Spleen (tissue), 13 donors: ENCODE measurements at regions of chr2 and their contacts with region 1.

Region 1: DNA sequence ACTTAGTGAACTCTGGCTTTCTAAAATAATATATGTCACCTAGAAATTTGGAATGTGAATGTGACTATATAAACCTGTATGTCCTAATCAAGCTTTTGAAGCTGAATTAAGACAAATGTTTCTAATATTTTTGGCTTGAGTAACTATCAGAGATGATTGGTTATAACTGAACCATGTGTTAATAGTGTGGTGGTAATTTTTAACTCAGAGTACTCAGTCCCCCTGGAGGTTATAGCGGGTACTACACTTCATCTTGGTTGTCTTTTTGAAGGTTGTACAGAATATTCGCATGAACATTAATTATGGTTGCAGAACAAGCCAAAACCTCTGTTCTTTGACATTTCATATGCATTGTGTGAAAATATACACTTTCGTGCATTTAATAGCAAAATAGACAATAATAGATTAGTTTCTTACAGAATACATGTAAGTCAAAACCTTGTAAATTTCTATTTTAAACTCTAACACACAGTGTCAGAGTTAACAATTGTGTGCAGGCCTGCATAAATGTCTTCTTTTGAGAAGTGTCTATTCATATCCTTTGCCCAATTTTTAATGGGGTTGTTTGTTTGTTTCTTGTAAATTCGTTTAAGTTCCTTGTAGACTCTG is 86.0 kb downstream of the OSBPL6 start:
- DNase-seq: no peak
- H3K4me3 ChIP-seq: no peak overlapping the region
- H3K27ac ChIP-seq: no peak overlapping the region
- H3K4me1 ChIP-seq: peaks cover 0 to 4% (median 0%) of the 10 kb centered on the region in 6 donors
- H3K27me3 ChIP-seq: no peaks in the 10 kb centered on the region
- CTCF ChIP-seq: peak; percentile 41 to 82 (median 70)
- POLR2A ChIP-seq: no peak

Region 2: DNA sequence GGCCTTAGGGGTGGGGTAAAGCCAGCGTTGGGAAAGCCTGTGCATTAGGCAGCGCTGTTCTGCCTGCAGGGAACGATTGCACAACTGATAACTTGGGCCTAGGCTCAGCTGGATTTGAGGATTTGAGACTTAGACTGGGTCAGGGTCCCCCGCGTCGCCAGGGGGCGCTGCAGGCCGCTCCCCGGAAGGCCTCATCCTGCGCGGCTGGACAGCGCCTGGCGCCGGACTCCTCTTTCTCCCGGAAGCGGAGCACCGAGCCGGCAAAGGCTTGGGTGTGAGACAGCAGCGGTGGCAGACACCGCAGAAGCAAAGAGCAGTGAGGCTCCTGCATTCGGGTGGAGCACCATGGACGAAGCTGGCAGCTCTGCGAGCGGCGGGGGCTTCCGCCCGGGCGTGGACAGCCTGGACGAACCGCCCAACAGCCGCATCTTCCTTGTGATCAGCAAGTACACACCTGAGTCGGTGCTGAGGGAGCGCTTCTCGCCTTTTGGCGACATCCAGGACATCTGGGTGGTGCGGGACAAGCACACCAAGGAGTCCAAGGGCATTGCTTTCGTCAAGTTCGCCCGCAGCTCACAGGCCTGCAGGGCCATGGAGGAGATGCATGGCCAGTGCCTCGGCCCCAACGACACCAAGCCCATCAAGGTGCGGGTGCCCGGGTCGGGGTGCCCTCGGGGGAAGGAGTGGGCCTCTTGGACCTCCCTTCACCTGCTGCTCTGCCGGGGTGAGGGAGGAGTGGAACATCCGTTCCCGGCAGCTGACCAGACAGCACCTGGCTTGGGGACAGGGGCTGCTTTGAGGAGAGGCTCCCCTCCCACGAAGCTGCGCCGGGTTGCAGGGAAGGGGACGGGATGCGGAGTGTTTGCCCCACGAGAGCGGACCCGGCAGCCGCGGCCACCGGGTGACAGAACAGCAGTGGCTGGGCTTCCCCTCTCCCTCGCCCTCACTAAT is 167.9 kb before region 1 on chr2 and contains the start of gene RBM45:
- intact Hi-C with region 1: loop called (anchors 5 kb)
- DNase-seq: peak; percentile 98
- H3K4me3 ChIP-seq: peak within 1 kb of the TSS; percentile 63 to 95 (median 82)
- H3K27ac ChIP-seq: peak within 1 kb of the TSS; percentile 10 to 85 (median 78)
- H3K4me1 ChIP-seq: peaks cover 4 to 39% (median 24%) of the 10 kb centered on the region in 6 donors
- H3K27me3 ChIP-seq: peaks cover 0 to 7% (median 0%) of the 10 kb centered on the region in 7 donors
- CTCF ChIP-seq: peak; percentile 83 to 98 (median 94)
- POLR2A ChIP-seq: peak in 1 of 3 donors; percentile 52
- total RNA-seq, gene RBM45: 13.0 to 19.3 (median 15.9) TPM